Posterior vena cava (tissue), 2 donors: ENCODE measurements at regions of chr7 and their contacts with region 1.

Region 1: GRCh38 chr7:20338285-20338684 is 7.6 kb downstream of the ITGB8 start:
- DNase-seq: no peak

Region 2: DNA sequence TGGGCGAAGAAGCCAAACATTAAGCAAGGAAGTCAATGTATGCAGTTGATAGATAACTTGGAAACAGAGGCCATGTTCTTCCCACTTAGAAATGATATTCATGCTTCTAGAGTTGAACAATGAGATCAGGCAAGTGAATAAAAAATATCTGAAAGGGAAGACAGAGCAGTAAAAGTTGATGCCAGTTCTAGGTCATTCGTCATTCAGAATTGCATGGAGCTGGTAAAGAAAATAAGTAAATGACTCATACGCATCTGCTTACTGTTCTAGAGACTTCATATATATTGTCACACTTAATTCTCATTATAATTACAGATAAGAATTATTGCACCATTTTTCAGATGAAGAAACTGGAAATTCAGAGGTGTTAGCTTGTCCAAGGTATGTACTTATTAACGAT is 1034.2 kb before region 1 on chr7:
- intact Hi-C with region 1: loop called in 1 of 2 experiments (anchors 5 kb)
- DNase-seq: no peak

Region 3: GRCh38 chr7:20249920-20250319 is 88.4 kb before region 1 on chr7:
- intact Hi-C with region 1: no loop called
- DNase-seq: no peak